Dorsolateral prefrontal cortex (tissue), 120 donors: ENCODE measurements at regions of chr13 and their contacts with region 1.

Region 1: DNA sequence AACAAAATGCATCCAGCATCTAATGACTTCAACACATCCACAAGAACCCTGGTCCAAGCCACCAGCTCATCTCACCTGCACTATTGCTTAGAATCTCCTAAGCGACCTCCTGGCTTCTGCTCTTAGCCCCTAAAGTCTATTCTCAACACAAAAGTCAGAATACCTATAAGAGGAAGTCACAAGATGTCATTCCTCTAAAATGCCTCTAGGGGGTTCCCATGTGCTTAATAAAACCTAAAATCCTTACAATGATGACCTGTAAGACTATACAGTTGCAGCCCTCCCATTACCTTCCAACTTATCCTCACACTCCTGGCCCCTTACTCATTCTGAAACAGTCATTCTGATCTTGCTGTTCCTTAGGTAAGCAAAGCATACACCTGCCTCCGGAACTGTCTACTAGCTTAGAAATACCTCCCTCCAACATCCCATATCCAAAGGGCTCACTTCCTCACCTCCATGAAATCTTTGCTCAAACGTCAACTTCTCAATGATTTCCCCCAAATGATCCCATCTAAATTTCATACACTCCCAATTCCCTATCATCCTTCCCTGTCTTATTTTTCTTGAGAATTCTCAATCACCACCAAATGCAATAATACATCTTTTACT is 10.0 kb downstream of the ATP7B start:
- DNase-seq: no peak
- H3K4me3 ChIP-seq: no peak overlapping the region
- H3K27ac ChIP-seq: no peak overlapping the region
- H3K27me3 ChIP-seq: no peaks in the 10 kb centered on the region
- CTCF ChIP-seq: peak; percentile 43 to 82 (median 72)

Region 2: GRCh38 chr13:51364404-51365008 is 636.7 kb before region 1 on chr13:
- intact Hi-C with region 1: no loop called
- DNase-seq: no peak
- H3K4me3 ChIP-seq: no peak overlapping the region
- H3K27ac ChIP-seq: peak overlapping the region in 1 of 59 donors; percentile 9
- H3K27me3 ChIP-seq: no peaks in the 10 kb centered on the region
- CTCF ChIP-seq: no peak

Region 3: GRCh38 chr13:51911860-51912510 is 89.2 kb before region 1 on chr13:
- intact Hi-C with region 1: loop called in 1 of 2 experiments (anchors 5 kb)
- DNase-seq: peak; percentile 44 to 81 (median 72)
- H3K4me3 ChIP-seq: peak overlapping the region in 41 of 59 donors; percentile 0 to 51 (median 31)
- H3K27ac ChIP-seq: peak overlapping the region in 22 of 59 donors; percentile 0 to 58 (median 32)
- H3K27me3 ChIP-seq: no peaks in the 10 kb centered on the region
- CTCF ChIP-seq: peak in 47 of 56 donors; percentile 19 to 71 (median 43)